ENCODE measurements at regions of chr11 and their contacts with region 1.

Region 1: GRCh38 chr11:65637794-65638317 is at the start of gene SIPA1:
- DNase-seq: peak; percentile 84 to 93 (median 87)
- ATAC-seq: peak; percentile 87
- H3K4me3 ChIP-seq: peak within 1 kb of the TSS; percentile 85
- H3K27ac ChIP-seq: peak within 1 kb of the TSS; percentile 93
- H3K4me1 ChIP-seq: peaks cover 32 to 95% of the 10 kb centered on the region in 2 experiments
- H3K27me3 ChIP-seq: no peaks in the 10 kb centered on the region
- CTCF ChIP-seq: peak; percentile 69 to 74 (median 71)
- EP300 ChIP-seq: 0 out of 2 replicates have a peak, but pooled peaks have one; percentile 5
- POLR2A ChIP-seq: peak; percentile 84; the same call in 1 of the 2 replicates
- RAD21 ChIP-seq: peak; percentile 19 to 67
- polyA plus RNA-seq, gene SIPA1: 0.25 to 1.4 TPM

Region 2: GRCh38 chr11:65615229-65615941 is 22.5 kb before region 1 on chr11 and contains the start of gene PCNX3:
- CTCF ChIA-PET with region 1: no interaction called
- POLR2A ChIA-PET with region 1: interaction called, 4 read pairs
- in situ Hi-C with region 1: no loop called
- intact Hi-C with region 1: loop called (anchors 2 kb)
- DNase-seq: peak; percentile 97 to 100 (median 99)
- ATAC-seq: peak; percentile 91
- H3K4me3 ChIP-seq: peak within 1 kb of the TSS; percentile 94
- H3K27ac ChIP-seq: peak within 1 kb of the TSS; percentile 74
- H3K4me1 ChIP-seq: peaks cover 28 to 78% of the 10 kb centered on the region in 2 experiments
- H3K27me3 ChIP-seq: no peaks in the 10 kb centered on the region
- CTCF ChIP-seq: no peak
- EP300 ChIP-seq: peak; percentile 37; the same call in 1 of the 2 replicates
- POLR2A ChIP-seq: peak; percentile 84
- RAD21 ChIP-seq: no peak
- polyA plus RNA-seq, gene PCNX3: 0.11 to 0.29 TPM

Region 3: DNA sequence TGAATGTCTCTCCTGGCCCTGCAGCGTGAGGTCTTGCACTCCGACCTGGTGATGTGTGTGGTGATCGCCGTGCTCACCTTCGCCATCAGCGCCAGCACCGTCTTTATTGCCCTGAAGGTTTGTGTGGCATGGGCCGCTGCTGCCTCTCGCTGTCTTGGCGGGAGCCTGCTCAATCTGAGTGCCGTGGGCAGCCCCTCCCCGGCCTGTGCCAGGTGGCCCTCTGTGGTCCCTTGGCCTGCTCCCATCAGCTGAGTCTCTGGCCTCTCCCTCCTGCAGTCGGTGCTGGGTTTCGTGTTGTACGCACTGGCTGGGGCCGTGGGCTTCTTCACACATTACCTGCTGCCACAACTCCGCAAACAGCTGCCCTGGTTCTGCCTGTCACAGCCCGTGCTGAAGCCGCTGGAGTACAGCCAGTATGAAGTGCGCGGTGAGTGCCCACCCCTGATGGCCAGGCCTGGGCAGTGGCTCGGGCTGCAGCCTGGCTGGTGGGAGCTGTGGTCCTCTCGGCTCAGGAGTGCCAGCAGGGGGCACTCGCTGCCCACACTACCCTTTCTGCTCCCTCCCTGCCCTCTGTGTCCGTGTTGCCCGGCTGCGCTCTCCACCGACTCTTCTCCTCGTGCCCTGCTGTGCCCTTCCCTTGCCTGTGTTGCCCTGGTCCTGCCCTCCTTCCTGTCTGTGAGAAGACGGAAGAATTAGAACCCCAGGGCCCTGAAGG is 12.1 kb before region 1 on chr11:
- CTCF ChIA-PET with region 1: no interaction called
- POLR2A ChIA-PET with region 1: interaction called, 11 read pairs
- in situ Hi-C with region 1: no loop called
- intact Hi-C with region 1: no loop called
- DNase-seq: peak in 3 of 4 experiments; percentile 32 to 46 (median 39)
- ATAC-seq: peak; percentile 81
- H3K4me3 ChIP-seq: no peak overlapping the region
- H3K27ac ChIP-seq: no peak overlapping the region
- H3K4me1 ChIP-seq: peaks cover 0 to 28% of the 10 kb centered on the region in 2 experiments; a peak in 1 of 5 replicates
- H3K27me3 ChIP-seq: no peaks in the 10 kb centered on the region
- CTCF ChIP-seq: peak; percentile 60 to 62 (median 61)
- EP300 ChIP-seq: no peak
- POLR2A ChIP-seq: no peak
- RAD21 ChIP-seq: peak; percentile 52 to 58

Region 4: GRCh38 chr11:65652511-65653231 is 14.8 kb after region 1 on chr11:
- CTCF ChIA-PET with region 1: no interaction called
- POLR2A ChIA-PET with region 1: interaction called, 56 read pairs
- in situ Hi-C with region 1: no loop called
- intact Hi-C with region 1: loop called (anchors 2 kb)
- DNase-seq: peak; percentile 95 to 99 (median 98)
- ATAC-seq: peak; percentile 93
- H3K4me3 ChIP-seq: peak overlapping the region; percentile 46
- H3K27ac ChIP-seq: peak overlapping the region; percentile 92
- H3K4me1 ChIP-seq: peaks cover 29 to 55% of the 10 kb centered on the region in 2 experiments
- H3K27me3 ChIP-seq: no peaks in the 10 kb centered on the region
- CTCF ChIP-seq: no peak
- EP300 ChIP-seq: no peak
- POLR2A ChIP-seq: peak; percentile 88
- RAD21 ChIP-seq: no peak; a peak in 1 of 4 replicates

Region 5: DNA sequence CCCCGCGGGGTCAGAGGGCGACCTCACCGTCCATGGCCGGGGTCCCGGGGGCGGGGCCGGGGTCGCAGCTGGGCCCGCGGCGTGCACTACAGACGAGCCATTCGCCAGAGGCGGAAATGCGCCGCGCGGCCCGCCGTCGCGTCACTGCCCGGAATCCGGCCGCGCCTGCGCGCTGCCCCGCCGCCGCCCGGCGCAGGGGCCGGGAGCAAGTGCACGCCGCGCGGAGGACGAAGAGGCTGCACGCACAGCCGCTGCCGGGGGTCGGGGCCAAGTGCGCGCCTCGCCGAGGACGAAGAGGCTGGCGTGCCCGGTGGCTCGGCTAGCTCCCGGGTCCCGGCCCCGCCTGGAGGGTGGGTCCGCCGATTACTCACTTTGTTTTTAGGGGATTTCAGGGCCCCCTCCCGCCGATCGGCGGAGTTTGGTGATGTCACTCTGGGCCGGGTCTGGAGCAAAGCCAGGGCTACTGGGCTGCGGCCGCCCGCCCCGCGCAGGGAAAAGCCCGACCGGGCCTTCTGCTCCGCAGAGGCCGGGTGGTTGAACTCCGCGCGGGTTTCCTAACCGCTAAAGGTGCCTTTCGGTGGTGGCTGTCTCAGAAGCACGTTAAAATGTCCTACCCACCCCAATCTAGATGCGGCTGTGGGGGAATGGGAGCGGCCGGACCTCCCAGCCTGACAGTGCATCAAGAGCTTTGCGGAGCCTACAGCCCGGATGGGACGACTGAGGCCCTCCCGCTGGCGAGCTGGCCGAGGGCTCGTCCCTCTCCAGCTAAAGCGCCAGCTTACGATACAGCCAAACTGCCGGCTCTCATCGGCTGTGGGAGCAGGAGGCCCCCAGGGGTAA is 25.2 kb after region 1 on chr11 and contains the start of gene RELA:
- CTCF ChIA-PET with region 1: no interaction called
- POLR2A ChIA-PET with region 1: interaction called, 11 read pairs
- in situ Hi-C with region 1: no loop called
- intact Hi-C with region 1: no loop called
- DNase-seq: peak; percentile 93 to 94 (median 94)
- ATAC-seq: peak; percentile 92
- H3K4me3 ChIP-seq: peak within 1 kb of the TSS; percentile 92
- H3K27ac ChIP-seq: peak within 1 kb of the TSS; percentile 87
- H3K4me1 ChIP-seq: peaks cover 7 to 20% of the 10 kb centered on the region in 2 experiments; a peak in 4 of 5 replicates
- H3K27me3 ChIP-seq: no peaks in the 10 kb centered on the region
- CTCF ChIP-seq: no peak
- EP300 ChIP-seq: no peak
- POLR2A ChIP-seq: peak; percentile 81
- RAD21 ChIP-seq: no peak
- polyA plus RNA-seq, gene RELA: 6.0 to 6.4 TPM

Measured in K562 (cell line).